Psoas muscle (tissue), 8 donors: ENCODE measurements at regions of chr3 and their contacts with region 1.

Region 1: GRCh38 chr3:36700537-36701248 is 63.7 kb downstream of the DCLK3 start:
- DNase-seq: peak; percentile 44 to 70
- ATAC-seq: peak in 3 of 4 donors; percentile 53 to 66 (median 54)
- H3K4me3 ChIP-seq: no peak overlapping the region
- H3K27ac ChIP-seq: no peak overlapping the region
- H3K4me1 ChIP-seq: no peaks in the 10 kb centered on the region
- H3K27me3 ChIP-seq: no peaks in the 10 kb centered on the region
- CTCF ChIP-seq: peak; percentile 59

Region 2: GRCh38 chr3:35965908-35966307 is 734.8 kb before region 1 on chr3:
- intact Hi-C with region 1: loop called (anchors 2 to 5 kb)
- DNase-seq: no peak
- ATAC-seq: no peak
- H3K4me3 ChIP-seq: no peak overlapping the region
- H3K27ac ChIP-seq: no peak overlapping the region
- H3K4me1 ChIP-seq: no peaks in the 10 kb centered on the region
- H3K27me3 ChIP-seq: no peaks in the 10 kb centered on the region
- CTCF ChIP-seq: peak; percentile 51

Region 3: GRCh38 chr3:36132214-36132613 is 568.5 kb before region 1 on chr3:
- intact Hi-C with region 1: loop called in 1 of 2 experiments (anchors 10 kb)
- DNase-seq: no peak
- ATAC-seq: no peak
- H3K4me3 ChIP-seq: no peak overlapping the region
- H3K27ac ChIP-seq: no peak overlapping the region
- H3K4me1 ChIP-seq: no peaks in the 10 kb centered on the region
- H3K27me3 ChIP-seq: no peaks in the 10 kb centered on the region
- CTCF ChIP-seq: no peak

Region 4: GRCh38 chr3:36615861-36616260 is 84.8 kb before region 1 on chr3:
- intact Hi-C with region 1: no loop called
- DNase-seq: no peak
- ATAC-seq: no peak
- H3K4me3 ChIP-seq: no peak overlapping the region
- H3K27ac ChIP-seq: no peak overlapping the region
- H3K4me1 ChIP-seq: no peaks in the 10 kb centered on the region
- H3K27me3 ChIP-seq: no peaks in the 10 kb centered on the region
- CTCF ChIP-seq: no peak